Thyroid gland (tissue), 4 donors: ENCODE measurements at regions of chr10 and their contacts with region 1.

Region 1: DNA sequence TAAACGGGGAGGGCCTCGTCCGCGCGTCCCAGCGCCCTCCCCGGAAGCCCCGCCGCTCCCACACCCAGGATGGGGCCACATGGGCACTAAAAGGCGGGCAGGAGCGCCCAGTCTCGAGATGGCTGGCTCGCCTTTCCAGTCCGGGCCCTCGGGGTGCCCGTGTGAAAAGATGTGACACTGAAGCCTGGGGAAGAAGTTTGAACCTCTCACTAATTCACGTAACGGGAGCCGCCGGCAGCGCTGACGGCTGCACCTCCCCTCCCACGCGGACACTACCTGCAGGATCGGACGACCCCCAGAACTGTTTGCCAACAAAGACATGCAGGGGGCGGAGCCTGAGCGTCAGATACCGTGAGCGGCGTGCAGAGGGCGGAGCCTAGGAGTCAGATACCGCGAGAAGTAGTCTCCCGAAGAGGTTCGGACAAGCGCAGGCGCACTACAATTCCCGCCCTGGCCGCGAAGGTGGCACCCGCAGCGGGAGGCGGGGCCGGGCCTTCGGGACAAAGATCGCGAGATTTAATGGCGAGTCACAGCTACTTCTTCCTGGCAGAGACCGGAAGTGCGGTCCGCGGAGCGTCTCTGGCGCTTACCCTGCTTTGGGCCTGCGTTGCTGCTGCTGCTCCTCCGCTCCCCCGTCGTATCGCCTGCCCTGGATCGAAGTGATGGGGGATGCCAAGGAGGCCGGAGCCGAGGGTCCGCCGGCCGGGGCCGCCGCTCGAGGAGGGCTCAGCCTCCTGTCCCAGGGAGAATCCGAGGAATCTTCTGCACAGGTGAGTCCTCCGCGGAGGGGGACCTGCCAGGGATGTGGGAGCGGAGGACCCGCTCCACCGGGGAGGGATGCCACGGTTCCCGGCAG is at the start of gene EDRF1:
- DNase-seq: peak; percentile 98 to 99
- H3K4me3 ChIP-seq: peak within 1 kb of the TSS; percentile 50 to 94 (median 68)
- H3K27ac ChIP-seq: peak within 1 kb of the TSS; percentile 64 to 94 (median 78)
- H3K4me1 ChIP-seq: peaks cover 7 to 9% of the 10 kb centered on the region in 2 donors
- H3K27me3 ChIP-seq: no peaks in the 10 kb centered on the region
- CTCF ChIP-seq: no peak
- POLR2A ChIP-seq: peak; percentile 40 to 81
- total RNA-seq, gene EDRF1: 23.2 to 35.5 (median 30.9) TPM

Region 2: DNA sequence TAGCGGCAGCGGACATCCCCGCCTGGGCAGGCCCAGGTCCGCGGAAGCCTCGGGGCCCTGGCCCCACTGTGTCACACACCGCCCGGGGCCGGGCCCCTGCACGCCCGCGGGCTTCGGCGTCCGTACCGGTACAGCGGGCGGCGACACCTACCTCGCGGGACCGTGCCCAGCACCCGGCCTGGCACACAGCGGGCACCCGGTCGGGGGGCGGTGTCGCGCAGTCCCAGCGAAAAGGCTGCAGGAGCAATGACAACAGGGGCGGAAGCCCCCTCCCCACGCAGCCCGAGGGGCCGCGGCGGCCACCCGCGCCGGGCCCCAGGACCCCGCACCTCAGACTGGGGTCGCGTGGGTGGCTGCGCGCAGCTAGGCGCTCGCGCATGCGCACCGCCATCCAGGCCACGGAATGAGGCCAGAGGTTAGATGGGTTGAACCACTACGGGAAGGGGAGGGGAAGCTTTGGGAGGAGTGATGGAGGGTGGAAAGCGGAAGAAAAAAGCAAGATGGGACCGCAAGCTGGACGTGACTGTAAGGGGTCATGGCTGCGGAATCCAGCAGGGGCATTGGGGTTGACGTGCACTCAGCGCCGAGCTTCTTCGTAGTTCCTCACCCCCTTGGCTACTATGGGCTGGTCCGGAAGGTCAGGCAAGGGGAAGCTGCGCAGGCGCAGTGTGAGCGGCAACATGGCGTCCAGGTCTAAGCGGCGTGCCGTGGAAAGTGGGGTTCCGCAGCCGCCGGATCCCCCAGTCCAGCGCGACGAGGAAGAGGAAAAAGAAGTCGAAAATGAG is 103.7 kb after region 1 on chr10 and contains the starts of genes BCCIP and UROS:
- intact Hi-C with region 1: loop called (anchors 10 kb)
- DNase-seq: peak; percentile 90 to 93
- H3K4me3 ChIP-seq: peak within 1 kb of the TSS; percentile 89 to 98 (median 96)
- H3K27ac ChIP-seq: peak within 1 kb of the TSS; percentile 41 to 86 (median 78)
- H3K4me1 ChIP-seq: peaks cover 27 to 30% of the 10 kb centered on the region in 2 donors
- H3K27me3 ChIP-seq: no peaks in the 10 kb centered on the region
- CTCF ChIP-seq: peak in 1 of 6 experiments; percentile 16
- POLR2A ChIP-seq: peak in 1 of 2 donors; percentile 55
- total RNA-seq, gene BCCIP: 38.6 to 52.1 (median 42.3) TPM
- total RNA-seq, gene UROS: 54.4 to 74.3 (median 69.6) TPM